Esophagus squamous epithelium (tissue), 5 donors: ENCODE measurements at regions of chr9 and their contacts with region 1.

Region 1: GRCh38 chr9:128339771-128340690 is at the start of gene SLC27A4:
- DNase-seq: no peak
- H3K4me3 ChIP-seq: peak within 1 kb of the TSS; percentile 74 to 83 (median 78)
- H3K27ac ChIP-seq: peak within 1 kb of the TSS; percentile 91 to 94 (median 93)
- H3K4me1 ChIP-seq: peaks cover 0 to 23% (median 11%) of the 10 kb centered on the region in 3 donors
- H3K27me3 ChIP-seq: no peaks in the 10 kb centered on the region
- CTCF ChIP-seq: peak in 2 of 6 experiments; percentile 9 to 17
- POLR2A ChIP-seq: peak in 1 of 4 donors; percentile 44
- total RNA-seq, gene SLC27A4: 36.6 to 110 (median 72.2) TPM

Region 2: GRCh38 chr9:127950513-127951289 is 389.3 kb before region 1 on chr9:
- intact Hi-C with region 1: no loop called
- DNase-seq: no peak
- H3K4me3 ChIP-seq: no peak overlapping the region
- H3K27ac ChIP-seq: peak overlapping the region in 3 of 4 donors; percentile 43 to 59 (median 55)
- H3K4me1 ChIP-seq: peaks cover 27 to 76% (median 29%) of the 10 kb centered on the region in 3 donors
- H3K27me3 ChIP-seq: no peaks in the 10 kb centered on the region
- CTCF ChIP-seq: no peak
- POLR2A ChIP-seq: no peak

Region 3: DNA sequence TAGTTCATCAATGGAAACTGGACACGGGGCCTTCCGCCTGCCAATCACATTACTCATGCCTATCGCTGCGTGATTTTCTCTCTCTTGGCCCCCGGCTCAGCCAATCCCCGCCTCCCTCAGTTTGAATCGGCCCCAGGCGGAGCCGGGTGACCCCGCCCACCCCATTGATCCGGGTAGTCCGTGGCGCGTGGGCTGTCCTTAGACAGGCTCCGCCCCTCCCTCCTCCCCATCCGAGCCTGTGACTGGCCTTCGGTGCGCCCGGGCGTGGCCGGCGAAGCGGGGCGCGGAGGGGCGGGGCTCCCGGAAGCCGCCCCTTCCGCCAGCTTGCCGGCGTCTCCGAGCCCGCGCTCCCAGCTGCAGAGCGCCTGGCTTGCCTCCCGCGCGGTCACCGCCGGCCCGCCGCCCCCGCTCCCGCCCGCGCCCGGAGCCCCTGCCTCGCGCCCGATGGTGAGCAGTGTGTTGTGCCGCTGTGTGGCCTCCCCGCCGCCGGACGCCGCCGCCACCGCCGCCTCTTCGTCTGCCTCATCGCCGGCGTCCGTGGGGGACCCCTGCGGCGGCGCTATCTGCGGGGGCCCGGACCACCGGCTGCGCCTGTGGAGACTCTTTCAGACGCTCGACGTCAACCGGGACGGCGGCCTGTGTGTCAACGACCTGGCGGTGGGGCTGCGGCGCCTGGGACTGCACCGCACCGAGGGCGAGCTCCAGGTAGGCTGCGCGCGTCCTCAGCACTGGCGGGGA is 272.0 kb before region 1 on chr9 and contains the start of gene SLC25A25:
- intact Hi-C with region 1: no loop called
- DNase-seq: peak; percentile 98
- H3K4me3 ChIP-seq: peak within 1 kb of the TSS; percentile 94 to 99 (median 98)
- H3K27ac ChIP-seq: peak within 1 kb of the TSS; percentile 96 to 100 (median 99)
- H3K4me1 ChIP-seq: peaks cover 41 to 80% (median 51%) of the 10 kb centered on the region in 3 donors
- H3K27me3 ChIP-seq: no peaks in the 10 kb centered on the region
- CTCF ChIP-seq: peak in 1 of 6 experiments; percentile 12
- POLR2A ChIP-seq: peak in 2 of 4 donors; percentile 93 to 97
- total RNA-seq, gene SLC25A25: 15.8 to 37.9 (median 24.1) TPM

Region 4: DNA sequence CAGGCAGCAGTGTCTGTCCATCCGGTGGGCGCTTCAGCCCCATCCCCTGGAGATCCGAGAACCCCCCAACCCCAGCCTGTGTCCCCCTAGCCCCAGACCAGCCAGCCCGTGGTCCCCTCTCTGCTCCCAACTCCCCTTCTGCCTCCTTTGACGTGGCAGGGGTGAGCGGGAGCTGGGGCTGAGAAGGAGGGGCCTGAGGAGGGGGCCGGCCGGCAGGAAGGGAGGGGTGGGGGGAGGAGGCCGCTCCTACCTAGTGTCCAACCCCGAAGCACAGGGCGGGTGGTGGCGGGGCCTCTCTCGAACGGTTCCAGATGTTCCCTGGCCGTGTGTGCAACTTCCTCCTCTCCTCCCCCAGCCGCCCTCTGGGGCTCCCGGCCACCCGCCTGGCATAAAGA is 95.2 kb before region 1 on chr9:
- intact Hi-C with region 1: no loop called
- DNase-seq: no peak
- H3K4me3 ChIP-seq: peak overlapping the region in 3 of 4 donors; percentile 29 to 57 (median 43)
- H3K27ac ChIP-seq: peak overlapping the region; percentile 46 to 89 (median 68)
- H3K4me1 ChIP-seq: peaks cover 10 to 36% (median 14%) of the 10 kb centered on the region in 3 donors
- H3K27me3 ChIP-seq: peaks cover 0 to 25% (median 0%) of the 10 kb centered on the region in 4 donors
- CTCF ChIP-seq: no peak
- POLR2A ChIP-seq: peak in 1 of 4 donors; percentile 18

Region 5: GRCh38 chr9:128293091-128293490 is 46.9 kb before region 1 on chr9:
- intact Hi-C with region 1: loop called (anchors 5 kb)
- DNase-seq: no peak
- H3K4me3 ChIP-seq: no peak overlapping the region
- H3K27ac ChIP-seq: no peak overlapping the region
- H3K4me1 ChIP-seq: peaks cover 0 to 17% (median 6%) of the 10 kb centered on the region in 3 donors
- H3K27me3 ChIP-seq: no peaks in the 10 kb centered on the region
- CTCF ChIP-seq: no peak
- POLR2A ChIP-seq: no peak

Region 6: DNA sequence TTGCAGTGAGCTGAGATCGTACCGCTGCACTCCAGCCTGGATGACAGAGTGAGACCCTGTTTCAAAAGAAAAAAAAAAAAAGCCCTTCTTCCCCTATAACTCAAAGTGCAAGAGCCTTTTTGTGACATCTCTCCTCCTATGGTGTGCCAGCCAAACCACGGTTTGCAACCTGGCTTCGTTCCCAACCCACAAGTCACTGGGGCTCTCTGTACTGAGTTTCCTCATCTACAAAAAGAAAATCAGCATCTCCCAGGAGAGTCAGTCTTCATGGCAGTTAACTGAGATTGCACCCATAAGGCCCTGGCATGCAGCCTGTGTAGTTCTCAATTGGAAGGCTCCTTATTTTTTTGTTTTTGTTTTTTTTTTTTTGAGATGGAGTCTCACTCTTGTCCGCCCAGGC is 130.5 kb after region 1 on chr9:
- intact Hi-C with region 1: no loop called
- DNase-seq: no peak
- H3K4me3 ChIP-seq: no peak overlapping the region
- H3K27ac ChIP-seq: no peak overlapping the region
- H3K4me1 ChIP-seq: no peaks in the 10 kb centered on the region
- H3K27me3 ChIP-seq: no peaks in the 10 kb centered on the region
- CTCF ChIP-seq: no peak
- POLR2A ChIP-seq: no peak